Psoas muscle (tissue), 8 donors: ENCODE measurements at regions of chr1 and their contacts with region 1.

Region 1: GRCh38 chr1:25095635-25096200 is 136.6 kb downstream of the SYF2 start:
- DNase-seq: no peak
- ATAC-seq: no peak
- H3K4me3 ChIP-seq: no peak overlapping the region
- H3K27ac ChIP-seq: no peak overlapping the region
- H3K4me1 ChIP-seq: no peaks in the 10 kb centered on the region
- H3K27me3 ChIP-seq: no peaks in the 10 kb centered on the region
- CTCF ChIP-seq: no peak

Region 2: DNA sequence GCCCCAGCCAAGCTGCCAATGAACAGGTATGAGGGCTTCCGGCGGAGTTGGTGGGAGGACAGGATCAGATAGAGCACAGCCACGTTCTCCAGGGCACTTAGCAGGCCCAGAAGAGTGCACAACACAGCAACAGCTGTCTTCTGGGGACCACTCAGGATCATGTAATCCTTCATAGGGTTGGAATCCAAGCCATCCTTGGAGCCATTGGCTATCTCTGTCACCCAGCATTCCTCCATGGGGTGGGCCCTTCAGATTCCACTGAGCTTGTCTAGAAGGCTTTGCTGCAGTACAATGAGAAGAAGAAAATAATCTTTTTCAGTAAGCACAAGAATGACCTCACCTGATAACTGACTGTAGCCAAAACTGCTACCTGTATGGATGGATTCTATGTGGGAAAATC is 1220.3 kb before region 1 on chr1:
- intact Hi-C with region 1: loop called in 1 of 2 experiments (anchors 5 kb)
- DNase-seq: no peak
- ATAC-seq: no peak
- H3K4me3 ChIP-seq: no peak overlapping the region
- H3K27ac ChIP-seq: no peak overlapping the region
- H3K4me1 ChIP-seq: no peaks in the 10 kb centered on the region
- H3K27me3 ChIP-seq: no peaks in the 10 kb centered on the region
- CTCF ChIP-seq: no peak

Region 3: DNA sequence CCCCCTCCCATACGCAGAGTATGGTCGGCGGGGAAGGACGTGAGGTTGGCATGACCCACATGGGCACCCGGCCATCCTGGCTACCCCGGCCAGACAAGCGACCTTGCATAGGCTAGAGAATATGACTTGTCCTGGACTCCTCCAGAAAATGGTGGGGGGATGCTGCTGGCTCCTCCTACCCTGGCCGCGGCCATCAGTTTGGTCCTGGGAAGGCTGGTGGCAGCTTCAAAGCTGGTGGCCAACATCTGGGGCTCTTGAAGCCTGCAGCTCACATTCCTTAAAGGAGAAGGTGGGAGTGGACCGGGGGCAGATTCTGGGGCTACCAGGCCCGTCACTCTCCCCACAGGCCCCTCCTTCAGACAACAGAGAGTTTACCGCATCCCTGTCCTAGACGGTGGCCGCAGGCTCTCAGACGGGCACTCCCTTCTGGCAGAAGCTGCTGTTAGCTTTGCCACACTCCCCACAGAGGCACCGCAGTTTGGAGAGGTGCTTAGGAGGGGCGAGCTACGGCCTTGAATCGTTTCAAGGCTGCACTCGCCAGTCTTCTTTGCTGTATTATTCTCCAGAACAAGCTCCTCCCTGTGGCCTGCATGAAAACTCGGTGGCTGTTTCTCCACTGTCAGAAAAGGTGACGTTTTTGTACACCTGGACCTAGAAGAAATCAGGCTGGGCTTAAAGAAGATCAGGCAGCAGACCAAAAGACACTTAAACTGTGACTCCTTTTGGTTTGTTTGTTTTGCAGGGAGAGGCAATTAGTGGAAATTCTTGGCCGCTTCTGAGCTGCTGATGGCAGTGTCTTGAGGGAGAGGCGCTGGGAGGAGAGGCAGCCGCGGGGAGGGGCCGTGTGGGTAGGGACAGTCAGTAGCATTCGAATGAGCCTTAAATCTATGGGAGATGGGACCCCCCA is 233.6 kb before region 1 on chr1:
- intact Hi-C with region 1: no loop called
- DNase-seq: no peak
- ATAC-seq: no peak
- H3K4me3 ChIP-seq: no peak overlapping the region
- H3K27ac ChIP-seq: no peak overlapping the region
- H3K4me1 ChIP-seq: no peaks in the 10 kb centered on the region
- H3K27me3 ChIP-seq: peaks cover 0 to 30% (median 2%) of the 10 kb centered on the region in 3 donors
- CTCF ChIP-seq: no peak

Region 4: GRCh38 chr1:24932284-24932683 is 163.4 kb before region 1 on chr1:
- intact Hi-C with region 1: loop called (anchors 2 kb)
- DNase-seq: peak in 1 of 2 donors; percentile 50
- ATAC-seq: peak; percentile 57 to 81 (median 72)
- H3K4me3 ChIP-seq: peak overlapping the region; percentile 35
- H3K27ac ChIP-seq: no peak overlapping the region
- H3K4me1 ChIP-seq: peaks cover 10% of the 10 kb centered on the region
- H3K27me3 ChIP-seq: peaks cover 4 to 76% (median 42%) of the 10 kb centered on the region in 3 donors
- CTCF ChIP-seq: peak; percentile 77